MCF 10A (cell line): ENCODE measurements at regions of chr11 and their contacts with region 1.

Region 1: GRCh38 chr11:130115218-130115617 is 44.4 kb upstream of the ST14 start:
- DNase-seq: peak; percentile 29
- H3K4me3 Mint-ChIP-seq: no peak overlapping the region
- H3K27ac Mint-ChIP-seq: no peak overlapping the region
- H3K4me1 Mint-ChIP-seq: peaks cover 6% of the 10 kb centered on the region
- H3K27me3 Mint-ChIP-seq: no peaks in the 10 kb centered on the region
- CTCF ChIP-seq: no peak

Region 2: GRCh38 chr11:130103296-130103814 is 11.9 kb before region 1 on chr11:
- CTCF ChIA-PET with region 1: interaction called, 8 read pairs
- POLR2A ChIA-PET with region 1: interaction called, 11 read pairs
- intact Hi-C with region 1: no loop called
- DNase-seq: peak; percentile 61
- H3K4me3 Mint-ChIP-seq: peak overlapping the region; percentile 43
- H3K27ac Mint-ChIP-seq: peak overlapping the region; percentile 65
- H3K4me1 Mint-ChIP-seq: peaks cover 34% of the 10 kb centered on the region
- H3K27me3 Mint-ChIP-seq: no peaks in the 10 kb centered on the region
- CTCF ChIP-seq: no peak

Region 3: DNA sequence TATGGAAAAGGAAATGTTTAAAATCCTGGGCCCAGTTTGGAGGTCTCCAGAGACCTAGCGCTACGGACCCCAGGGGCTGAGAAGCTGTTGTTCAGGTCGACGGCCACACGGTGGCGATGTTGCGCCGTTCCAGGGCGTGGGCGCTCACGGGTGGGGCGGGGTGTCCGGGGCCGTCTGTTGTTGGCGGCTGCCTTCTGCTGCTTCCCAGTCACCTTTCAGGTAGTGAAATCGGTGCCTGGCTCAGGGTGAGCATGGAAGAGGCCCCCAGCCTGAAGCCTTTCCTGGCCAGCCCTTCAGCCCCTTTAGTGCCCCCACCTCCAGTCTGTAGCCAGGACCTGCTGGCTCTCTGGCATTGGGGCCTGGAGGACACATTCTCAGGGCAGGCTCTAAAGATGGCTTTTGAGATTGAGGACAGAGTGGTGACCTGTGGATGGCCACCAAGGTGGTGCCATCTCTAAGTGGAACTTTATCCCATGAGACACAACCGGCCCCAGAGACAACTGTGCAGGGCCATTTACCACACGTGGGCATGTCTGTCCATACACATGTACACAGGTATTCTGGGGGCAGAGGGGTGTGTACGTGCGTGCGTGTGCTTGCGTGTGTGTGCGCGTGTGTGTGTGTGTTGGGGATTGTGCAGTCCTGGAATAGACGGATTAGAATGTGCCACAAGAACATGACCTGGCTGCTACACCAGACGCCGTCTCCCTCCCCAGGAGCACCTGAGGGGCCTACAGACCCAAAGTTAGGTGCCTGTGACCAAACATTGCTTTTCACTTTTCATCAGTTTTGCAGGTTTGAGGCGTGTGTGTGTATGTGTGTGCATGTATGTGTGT is 98.1 kb after region 1 on chr11:
- CTCF ChIA-PET with region 1: no interaction called
- POLR2A ChIA-PET with region 1: no interaction called
- intact Hi-C with region 1: no loop called
- DNase-seq: peak; percentile 55
- H3K4me3 Mint-ChIP-seq: no peak overlapping the region
- H3K27ac Mint-ChIP-seq: no peak overlapping the region
- H3K4me1 Mint-ChIP-seq: no peaks in the 10 kb centered on the region
- H3K27me3 Mint-ChIP-seq: no peaks in the 10 kb centered on the region
- CTCF ChIP-seq: peak; percentile 96